Gastrocnemius medialis (tissue), 4 donors: ENCODE measurements at regions of chr9 and their contacts with region 1.

Region 1: GRCh38 chr9:17906176-17906840 is 327.4 kb downstream of the SH3GL2 start:
- DNase-seq: no peak
- ATAC-seq: no peak
- H3K4me3 ChIP-seq: peak overlapping the region in 3 of 4 donors; percentile 9 to 19 (median 11)
- H3K27ac ChIP-seq: no peak overlapping the region
- H3K4me1 ChIP-seq: no peaks in the 10 kb centered on the region
- H3K27me3 ChIP-seq: peaks cover 5 to 19% (median 11%) of the 10 kb centered on the region in 3 donors
- CTCF ChIP-seq: no peak
- POLR2A ChIP-seq: no peak

Region 2: DNA sequence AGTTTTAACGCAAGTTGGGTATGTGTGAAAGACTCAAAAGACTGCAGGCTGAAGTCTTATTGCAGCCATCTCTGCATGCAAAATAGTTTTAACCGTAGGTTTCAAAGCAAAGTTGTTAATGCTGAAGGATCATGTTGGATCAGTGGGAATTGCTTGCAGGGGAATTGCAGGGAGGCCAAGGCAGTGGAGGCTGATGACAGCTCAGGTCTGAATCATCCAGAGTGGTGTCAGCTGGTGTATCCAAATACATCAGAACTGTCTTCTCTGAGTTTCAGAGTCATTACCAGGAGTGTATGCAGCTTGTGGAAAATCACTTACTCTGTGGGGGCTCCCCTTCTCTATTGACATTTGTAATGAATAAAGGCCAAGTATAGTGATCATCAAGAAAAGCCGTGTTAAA is 108.2 kb after region 1 on chr9:
- in situ Hi-C with region 1: loop called in 1 of 4 experiments (anchors 25 kb)
- intact Hi-C with region 1: no loop called
- DNase-seq: no peak
- ATAC-seq: no peak
- H3K4me3 ChIP-seq: no peak overlapping the region
- H3K27ac ChIP-seq: no peak overlapping the region
- H3K4me1 ChIP-seq: no peaks in the 10 kb centered on the region
- H3K27me3 ChIP-seq: no peaks in the 10 kb centered on the region
- CTCF ChIP-seq: no peak
- POLR2A ChIP-seq: no peak